ENCODE measurements at regions of chr15 and their contacts with region 1.

Region 1: DNA sequence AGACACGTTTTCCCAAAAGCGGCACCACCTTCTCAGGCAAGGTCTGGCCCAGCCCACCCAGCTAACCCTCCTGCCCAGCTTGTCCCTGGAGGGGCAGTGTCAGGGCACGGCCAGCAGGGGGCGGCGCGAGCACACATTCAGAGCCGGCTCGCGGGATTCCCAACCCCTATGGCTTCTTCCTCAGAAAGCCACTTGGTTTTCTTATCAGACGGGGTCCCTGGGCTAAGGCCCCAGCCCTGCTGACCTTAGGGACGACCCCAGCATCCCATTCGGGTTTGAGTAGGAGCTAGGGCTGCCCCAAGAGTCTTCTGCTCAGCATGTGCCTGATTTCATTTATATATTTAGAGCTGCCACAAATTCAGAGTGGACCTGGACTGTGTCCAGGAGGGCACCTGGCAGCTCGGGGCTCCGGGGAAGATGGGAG is 14.5 kb downstream of the RLBP1 start:
- DNase-seq: peak; percentile 88
- CTCF ChIP-seq: peak; percentile 99

Region 2: DNA sequence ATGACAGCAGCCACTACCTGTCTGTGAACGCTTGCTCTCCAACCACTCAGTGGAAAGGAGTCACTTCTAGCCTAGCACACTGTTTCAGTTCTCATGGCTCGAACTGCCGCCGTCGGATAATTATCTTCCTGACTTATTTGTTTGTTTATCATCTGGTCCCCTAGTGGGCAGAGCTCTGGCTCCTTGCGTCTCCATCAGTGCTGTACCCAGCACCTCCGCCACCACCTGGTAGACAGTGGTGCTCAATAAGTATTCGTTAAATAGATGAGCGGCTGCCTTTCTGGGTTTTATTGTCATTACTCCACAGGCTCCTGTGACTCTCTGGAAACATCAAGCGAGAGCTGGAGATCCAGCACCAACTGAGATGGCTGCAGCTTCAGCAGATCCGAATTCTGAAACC is 1247.8 kb before region 1 on chr15:
- CTCF ChIA-PET with region 1: no interaction called
- POLR2A ChIA-PET with region 1: no interaction called
- DNase-seq: no peak
- CTCF ChIP-seq: no peak

Region 3: GRCh38 chr15:89057504-89058133 is 149.3 kb before region 1 on chr15:
- CTCF ChIA-PET with region 1: interaction called, 18 read pairs
- POLR2A ChIA-PET with region 1: no interaction called
- DNase-seq: peak; percentile 83
- CTCF ChIP-seq: peak; percentile 98

Region 4: GRCh38 chr15:89221543-89221942 is 14.6 kb after region 1 on chr15 and contains the start of gene RLBP1:
- CTCF ChIA-PET with region 1: interaction called, 57 read pairs
- POLR2A ChIA-PET with region 1: no interaction called
- DNase-seq: no peak
- CTCF ChIP-seq: no peak

Region 5: DNA sequence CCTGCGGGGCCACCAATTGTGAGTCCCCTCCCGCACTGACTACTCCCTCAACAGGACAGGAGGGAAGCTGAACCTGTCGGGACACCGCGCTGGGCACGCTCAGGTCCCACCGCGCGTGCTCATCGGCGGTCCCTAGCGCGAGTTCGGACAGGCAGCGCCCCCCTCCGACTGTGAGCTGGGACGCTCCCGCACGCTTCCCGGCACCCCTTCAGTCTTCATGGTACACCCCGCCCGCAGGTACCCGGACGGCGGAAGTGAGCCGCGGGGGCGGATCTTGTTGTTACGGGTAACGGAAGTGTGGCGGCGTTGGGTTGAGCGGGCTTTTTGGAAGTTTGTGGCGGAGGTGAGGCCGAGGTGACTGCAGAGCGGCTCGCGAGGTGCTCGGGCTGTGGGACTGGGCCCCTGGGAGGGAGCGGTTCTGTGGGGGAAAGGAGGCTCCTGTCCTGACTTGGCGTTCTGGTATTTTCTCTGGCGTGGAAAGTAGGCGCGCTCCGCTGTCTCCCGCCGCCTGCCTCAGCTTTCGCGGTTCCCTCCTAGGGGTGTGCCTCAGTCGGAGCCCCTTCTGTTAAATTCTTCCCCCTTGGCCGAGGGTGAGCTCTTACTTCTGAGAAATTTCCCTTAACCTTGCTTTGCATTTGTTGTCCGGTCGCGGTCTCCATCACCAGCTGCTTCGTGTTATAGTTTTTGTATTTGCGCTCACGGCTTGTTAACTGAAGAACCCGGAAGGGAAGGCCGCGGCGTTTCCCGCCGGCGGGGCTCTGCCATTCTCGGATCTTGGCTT is 37.0 kb after region 1 on chr15 and contains the start of gene FANCI:
- CTCF ChIA-PET with region 1: interaction called, 32 read pairs
- POLR2A ChIA-PET with region 1: no interaction called
- DNase-seq: peak; percentile 95
- CTCF ChIP-seq: peak; percentile 66

Region 6: GRCh38 chr15:89299896-89300295 is 93.0 kb after region 1 on chr15:
- CTCF ChIA-PET with region 1: interaction called, 24 read pairs
- POLR2A ChIA-PET with region 1: interaction called, 3 read pairs
- DNase-seq: no peak
- CTCF ChIP-seq: peak; percentile 13